WTC11 (cell line): ENCODE measurements at regions of chr1 and their contacts with region 1.

Region 1: DNA sequence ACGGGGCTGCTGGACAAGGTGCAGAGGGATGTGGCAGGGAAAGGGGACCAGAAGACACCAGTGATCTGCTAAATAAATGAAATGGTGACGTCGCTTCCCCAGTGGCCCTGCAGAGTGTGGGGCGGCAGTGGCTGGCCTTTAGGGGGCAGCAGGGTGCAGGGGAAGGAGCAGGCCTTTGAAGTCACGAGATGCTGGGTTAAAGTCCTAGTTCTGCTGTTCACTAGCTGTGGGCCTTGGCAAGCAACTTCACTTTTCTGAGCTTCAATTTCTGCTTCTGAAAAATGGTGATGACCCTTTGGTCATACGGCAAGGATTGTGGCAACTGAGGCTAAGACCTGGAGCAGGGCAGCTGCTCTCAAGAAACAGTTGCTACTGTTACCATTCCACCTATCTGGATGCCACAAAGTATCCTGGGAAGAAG is 9.2 kb upstream of the GALE start:
- DNase-seq: peak; percentile 84
- ATAC-seq: peak; percentile 81
- H3K4me3 Mint-ChIP-seq: no peak overlapping the region
- H3K27ac Mint-ChIP-seq: no peak overlapping the region
- H3K4me1 Mint-ChIP-seq: peaks cover 7% of the 10 kb centered on the region
- H3K27me3 Mint-ChIP-seq: no peaks in the 10 kb centered on the region; the same call in 1 of the 2 replicates
- CTCF ChIP-seq: 0 out of 2 replicates have a peak, but pooled peaks have one; percentile 51

Region 2: DNA sequence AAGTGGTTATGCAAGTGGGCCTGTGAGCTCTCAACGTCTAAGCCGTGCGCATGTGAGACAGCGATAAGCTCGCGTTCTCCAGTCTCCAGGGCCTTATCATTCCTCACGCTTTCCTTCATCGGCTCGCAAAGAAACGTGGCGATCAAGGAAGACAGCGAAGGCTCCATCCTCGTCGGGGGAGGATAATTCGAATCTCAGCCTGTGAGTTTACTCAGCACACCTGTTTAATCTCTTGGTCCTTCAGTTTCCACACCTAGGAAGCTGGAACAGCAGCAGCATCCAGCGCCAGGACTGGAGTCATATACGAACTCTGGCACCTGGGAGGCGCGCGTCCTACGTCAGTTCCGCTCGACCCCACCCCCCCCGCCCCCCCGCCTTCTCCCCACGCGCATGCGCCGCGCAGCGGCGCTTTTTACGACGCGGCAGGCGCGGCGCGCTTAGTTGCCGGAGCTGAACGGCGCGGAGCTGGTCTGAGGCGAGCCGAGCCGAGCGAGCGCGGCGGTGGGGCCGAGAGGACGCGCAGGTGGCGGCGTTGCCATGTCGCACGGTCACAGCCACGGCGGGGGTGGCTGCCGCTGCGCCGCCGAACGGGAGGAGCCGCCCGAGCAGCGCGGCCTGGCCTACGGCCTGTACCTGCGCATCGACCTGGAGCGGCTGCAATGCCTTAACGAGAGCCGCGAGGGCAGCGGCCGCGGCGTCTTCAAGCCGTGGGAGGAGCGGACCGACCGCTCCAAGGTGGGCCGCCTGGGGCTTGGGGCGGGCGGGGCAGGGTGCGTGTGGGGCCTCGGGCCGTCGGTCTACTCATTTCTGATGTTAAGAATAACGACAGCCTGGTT is 31.6 kb before region 1 on chr1 and contains the start of gene PITHD1:
- CTCF ChIA-PET with region 1: interaction called, 18 read pairs
- POLR2A ChIA-PET with region 1: no interaction called
- DNase-seq: peak; percentile 76
- ATAC-seq: peak; percentile 87
- H3K4me3 Mint-ChIP-seq: peak within 1 kb of the TSS; percentile 90
- H3K27ac Mint-ChIP-seq: peak within 1 kb of the TSS; percentile 99
- H3K4me1 Mint-ChIP-seq: peaks cover 18% of the 10 kb centered on the region
- H3K27me3 Mint-ChIP-seq: no peaks in the 10 kb centered on the region
- CTCF ChIP-seq: no peak
- total RNA-seq, gene PITHD1: 59.9 to 66.2 TPM (median 62.2 TPM) in 3 replicates

Region 3: DNA sequence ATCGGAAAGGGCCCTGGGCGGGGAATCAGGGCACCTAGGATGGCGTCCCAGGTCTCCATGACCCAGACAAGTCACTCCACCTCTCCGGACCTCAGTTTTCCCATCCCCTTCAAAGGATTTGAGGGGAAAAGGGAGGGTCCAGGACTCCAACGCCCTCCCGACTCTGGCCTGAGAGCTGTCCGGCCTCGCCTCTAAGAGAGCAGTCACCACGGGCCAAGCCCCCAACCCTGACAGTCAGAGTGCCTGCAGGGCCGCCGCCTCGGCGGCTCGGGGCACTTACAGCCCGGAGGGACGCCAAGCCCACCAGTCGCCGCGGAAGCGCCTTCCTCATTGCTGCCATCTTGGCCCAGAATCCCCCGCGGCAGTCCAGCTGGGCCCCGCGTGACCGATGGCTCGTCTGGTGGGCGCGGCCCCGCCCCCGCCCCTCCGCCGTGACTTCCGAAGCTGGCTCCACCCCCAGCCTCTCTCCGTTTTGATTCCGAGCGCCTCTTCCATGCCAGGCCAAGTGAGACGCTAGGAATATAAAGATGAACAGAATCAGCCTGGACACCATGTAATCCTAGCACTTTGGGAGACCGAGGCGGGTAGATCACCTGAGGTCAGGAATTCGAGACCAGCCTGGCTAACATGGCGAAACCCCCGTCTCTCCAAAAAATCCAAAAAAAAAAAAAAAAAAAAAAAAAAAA is 15.5 kb after region 1 on chr1 and contains the start of gene HMGCL:
- CTCF ChIA-PET with region 1: interaction called, 105 read pairs
- POLR2A ChIA-PET with region 1: interaction called, 6 read pairs
- DNase-seq: peak; percentile 85
- ATAC-seq: peak; percentile 87
- H3K4me3 Mint-ChIP-seq: peak within 1 kb of the TSS; percentile 97
- H3K27ac Mint-ChIP-seq: peak within 1 kb of the TSS; percentile 95
- H3K4me1 Mint-ChIP-seq: peaks cover 8% of the 10 kb centered on the region
- H3K27me3 Mint-ChIP-seq: no peaks in the 10 kb centered on the region
- CTCF ChIP-seq: no peak
- total RNA-seq, gene HMGCL: 22.7 to 31.2 TPM (median 25.4 TPM) in 3 replicates

Region 4: GRCh38 chr1:23854568-23854967 is 44.8 kb after region 1 on chr1:
- CTCF ChIA-PET with region 1: interaction called, 14 read pairs
- POLR2A ChIA-PET with region 1: no interaction called
- DNase-seq: no peak
- ATAC-seq: no peak; the same call in 1 of the 2 replicates
- H3K4me3 Mint-ChIP-seq: no peak overlapping the region
- H3K27ac Mint-ChIP-seq: no peak overlapping the region
- H3K4me1 Mint-ChIP-seq: no peaks in the 10 kb centered on the region
- H3K27me3 Mint-ChIP-seq: no peaks in the 10 kb centered on the region; the same call in 1 of the 2 replicates
- CTCF ChIP-seq: no peak

Region 5: GRCh38 chr1:23902321-23903278 is 92.8 kb after region 1 on chr1:
- CTCF ChIA-PET with region 1: interaction called, 44 read pairs
- POLR2A ChIA-PET with region 1: no interaction called
- DNase-seq: peak; percentile 44
- ATAC-seq: peak; percentile 49
- H3K4me3 Mint-ChIP-seq: peak overlapping the region; percentile 59
- H3K27ac Mint-ChIP-seq: no peak overlapping the region
- H3K4me1 Mint-ChIP-seq: peaks cover 29% of the 10 kb centered on the region
- H3K27me3 Mint-ChIP-seq: peaks cover 50% of the 10 kb centered on the region
- CTCF ChIP-seq: no peak

Region 6: GRCh38 chr1:23916209-23917131 is 106.7 kb after region 1 on chr1:
- CTCF ChIA-PET with region 1: interaction called, 98 read pairs
- POLR2A ChIA-PET with region 1: no interaction called
- DNase-seq: peak; percentile 80
- ATAC-seq: peak; percentile 97
- H3K4me3 Mint-ChIP-seq: no peak overlapping the region
- H3K27ac Mint-ChIP-seq: no peak overlapping the region
- H3K4me1 Mint-ChIP-seq: peaks cover 6% of the 10 kb centered on the region
- H3K27me3 Mint-ChIP-seq: peaks cover 6% of the 10 kb centered on the region; the same call in 1 of the 2 replicates
- CTCF ChIP-seq: no peak

Region 7: GRCh38 chr1:23957096-23957495 is 147.3 kb after region 1 on chr1:
- CTCF ChIA-PET with region 1: interaction called, 11 read pairs
- POLR2A ChIA-PET with region 1: interaction called, 3 read pairs
- DNase-seq: no peak
- ATAC-seq: no peak
- H3K4me3 Mint-ChIP-seq: peak overlapping the region; percentile 21
- H3K27ac Mint-ChIP-seq: peak overlapping the region; percentile 7; the same call in 1 of the 2 replicates
- H3K4me1 Mint-ChIP-seq: peaks cover 46% of the 10 kb centered on the region
- H3K27me3 Mint-ChIP-seq: no peaks in the 10 kb centered on the region
- CTCF ChIP-seq: no peak